Activated T-helper 1 cell treated with anti-CD3 and anti-CD28 coated beads, Interleukin-12 subunit alpha, Interleukin-12 subunit beta, Interleukin-2, Interleukin-4 antibody, amounts not matched to agents 30 ng/mL and 10 ng/mL and 1 ng/mL, durations not matched to agents 14 hours and 24 hours and 36 hours (primary cell): ENCODE measurements at regions of chr4 and their contacts with region 1.

Region 1: GRCh38 chr4:55424791-55425190 is 29.0 kb downstream of the TMEM165 start:
- DNase-seq: no peak
- H3K4me3 Mint-ChIP-seq: no peak overlapping the region
- H3K27ac Mint-ChIP-seq: no peak overlapping the region
- H3K4me1 Mint-ChIP-seq: no peaks in the 10 kb centered on the region
- H3K27me3 Mint-ChIP-seq: no peaks in the 10 kb centered on the region

Region 2: GRCh38 chr4:56999751-57000150 is 1575.0 kb after region 1 on chr4:
- intact Hi-C with region 1: loop called (anchors 10 kb)
- DNase-seq: no peak
- H3K4me3 Mint-ChIP-seq: no peak overlapping the region
- H3K27ac Mint-ChIP-seq: no peak overlapping the region
- H3K4me1 Mint-ChIP-seq: peaks cover 5% of the 10 kb centered on the region
- H3K27me3 Mint-ChIP-seq: no peaks in the 10 kb centered on the region